Mucosa of descending colon (tissue), 3 donors: ENCODE measurements at regions of chr13 and their contacts with region 1.

Region 1: DNA sequence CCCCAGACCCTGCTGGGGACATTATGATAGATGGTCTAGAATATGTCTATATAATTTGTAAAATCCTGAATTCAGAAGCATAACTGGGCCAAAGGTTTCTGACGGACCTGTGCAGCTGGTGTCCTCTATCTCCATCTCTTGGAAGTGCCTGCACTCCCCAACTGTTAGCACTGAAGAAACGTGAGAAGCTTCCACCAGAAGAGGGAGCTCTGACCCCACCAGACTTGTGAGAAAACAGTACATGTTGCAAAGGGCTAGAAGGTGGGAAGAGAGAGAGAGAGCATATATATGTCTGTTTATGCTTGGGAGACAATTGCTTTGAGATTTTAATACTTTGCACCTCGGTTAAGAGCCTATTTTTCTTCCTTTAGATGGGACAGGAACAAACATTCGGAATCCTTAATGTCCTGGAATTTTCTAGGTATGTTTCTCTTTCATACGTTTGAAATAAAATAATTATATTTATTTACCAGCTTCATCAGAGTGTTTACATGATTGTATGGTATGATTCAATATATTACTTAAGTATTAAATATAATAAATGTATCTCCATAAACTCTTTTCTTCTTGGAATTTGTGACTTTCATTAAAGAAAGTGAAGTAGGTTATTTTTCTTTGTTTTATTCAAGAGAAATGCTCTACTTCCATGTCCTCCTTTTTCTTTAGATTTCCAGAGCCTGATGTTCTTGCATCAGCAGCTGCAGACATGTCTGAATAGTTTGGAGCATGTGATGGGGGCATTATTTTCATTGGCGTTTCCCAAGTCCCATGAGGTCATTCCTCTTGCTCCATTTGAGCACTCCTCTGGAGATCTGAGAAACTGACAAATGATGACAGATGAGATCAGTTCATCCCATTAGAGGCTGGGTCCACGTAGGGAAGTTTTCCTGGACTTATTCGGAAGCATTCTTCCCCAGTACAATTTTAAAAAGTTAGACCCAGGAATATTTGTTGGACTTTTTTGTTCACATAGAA is 202.9 kb downstream of the ATP8A2 start:
- DNase-seq: peak in 2 of 3 donors; percentile 42 to 92
- ATAC-seq: peak; percentile 82
- H3K4me3 ChIP-seq: no peak overlapping the region
- H3K4me1 ChIP-seq: no peaks in the 10 kb centered on the region
- CTCF ChIP-seq: peak; percentile 51

Region 2: GRCh38 chr13:25186187-25186586 is 388.5 kb before region 1 on chr13:
- intact Hi-C with region 1: no loop called
- DNase-seq: no peak
- ATAC-seq: no peak
- H3K4me3 ChIP-seq: no peak overlapping the region
- H3K4me1 ChIP-seq: no peaks in the 10 kb centered on the region
- CTCF ChIP-seq: no peak

Region 3: GRCh38 chr13:26062844-26063444 is 488.2 kb after region 1 on chr13:
- intact Hi-C with region 1: loop called (anchors 5 kb)
- DNase-seq: peak in 1 of 3 donors; percentile 66
- ATAC-seq: peak; percentile 44
- H3K4me3 ChIP-seq: no peak overlapping the region
- H3K4me1 ChIP-seq: no peaks in the 10 kb centered on the region
- CTCF ChIP-seq: peak; percentile 13